ENCODE measurements at regions of chr11 and their contacts with region 1.

Region 1: GRCh38 chr11:111429066-111429506 is 50.0 kb upstream of the POU2AF1 start:
- DNase-seq: peak; percentile 58
- CTCF ChIP-seq: peak; percentile 75

Region 2: GRCh38 chr11:109946322-109946846 is 1482.7 kb before region 1 on chr11:
- CTCF ChIA-PET with region 1: no interaction called
- POLR2A ChIA-PET with region 1: no interaction called
- DNase-seq: peak; percentile 58
- CTCF ChIP-seq: peak; percentile 85

Region 3: GRCh38 chr11:111327908-111328624 is 101.0 kb before region 1 on chr11:
- CTCF ChIA-PET with region 1: interaction called, 20 read pairs
- POLR2A ChIA-PET with region 1: no interaction called
- DNase-seq: no peak
- CTCF ChIP-seq: no peak

Region 4: GRCh38 chr11:111384494-111384893 is 44.6 kb before region 1 on chr11:
- CTCF ChIA-PET with region 1: interaction called, 636 read pairs
- POLR2A ChIA-PET with region 1: no interaction called
- DNase-seq: no peak
- CTCF ChIP-seq: no peak

Region 5: DNA sequence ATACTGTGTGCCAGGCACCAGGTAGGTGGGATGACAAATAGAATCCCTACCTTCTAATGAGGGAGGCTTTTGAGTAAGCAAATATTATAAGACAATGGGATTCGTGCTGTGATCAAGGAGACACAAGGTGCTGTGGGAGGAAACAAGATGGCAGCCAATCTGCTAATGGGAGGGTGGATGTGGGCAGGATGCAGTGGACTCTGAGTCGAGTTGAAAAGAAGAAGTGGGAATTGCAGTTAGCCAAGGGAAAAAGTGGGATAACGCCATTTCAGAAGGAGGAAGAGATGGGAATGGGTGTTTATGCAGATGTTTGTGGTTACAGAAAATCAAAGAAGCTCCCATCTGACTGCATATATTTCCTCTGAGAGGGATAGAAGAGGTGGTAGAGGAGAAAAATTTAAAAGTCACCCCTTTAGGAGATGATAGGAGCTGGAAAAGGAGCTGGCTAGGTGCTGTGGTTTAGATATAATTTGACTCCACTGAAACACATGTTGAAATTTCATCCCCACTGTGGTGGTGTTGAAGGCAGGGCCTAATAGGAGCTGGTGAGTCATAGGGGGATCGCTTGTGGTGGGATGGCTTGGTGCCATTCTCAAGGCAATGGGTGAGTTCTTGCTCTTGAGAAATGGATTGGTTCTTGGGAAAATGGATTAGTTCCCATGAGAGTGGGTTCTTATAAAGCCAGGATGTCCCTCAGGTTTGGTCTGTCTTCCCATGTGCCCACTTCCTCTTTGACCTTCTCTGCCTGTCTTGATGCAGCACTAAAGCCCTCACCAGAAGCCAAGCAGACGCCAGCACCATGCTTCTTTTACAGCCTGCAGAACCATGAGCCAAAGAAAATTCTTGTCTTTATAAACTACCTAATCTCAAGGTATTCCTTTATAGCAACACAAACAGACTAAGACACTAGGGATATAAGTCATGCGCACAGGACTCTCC is 20.0 kb before region 1 on chr11:
- CTCF ChIA-PET with region 1: interaction called, 155 read pairs
- POLR2A ChIA-PET with region 1: no interaction called
- DNase-seq: no peak
- CTCF ChIP-seq: no peak

Region 6: DNA sequence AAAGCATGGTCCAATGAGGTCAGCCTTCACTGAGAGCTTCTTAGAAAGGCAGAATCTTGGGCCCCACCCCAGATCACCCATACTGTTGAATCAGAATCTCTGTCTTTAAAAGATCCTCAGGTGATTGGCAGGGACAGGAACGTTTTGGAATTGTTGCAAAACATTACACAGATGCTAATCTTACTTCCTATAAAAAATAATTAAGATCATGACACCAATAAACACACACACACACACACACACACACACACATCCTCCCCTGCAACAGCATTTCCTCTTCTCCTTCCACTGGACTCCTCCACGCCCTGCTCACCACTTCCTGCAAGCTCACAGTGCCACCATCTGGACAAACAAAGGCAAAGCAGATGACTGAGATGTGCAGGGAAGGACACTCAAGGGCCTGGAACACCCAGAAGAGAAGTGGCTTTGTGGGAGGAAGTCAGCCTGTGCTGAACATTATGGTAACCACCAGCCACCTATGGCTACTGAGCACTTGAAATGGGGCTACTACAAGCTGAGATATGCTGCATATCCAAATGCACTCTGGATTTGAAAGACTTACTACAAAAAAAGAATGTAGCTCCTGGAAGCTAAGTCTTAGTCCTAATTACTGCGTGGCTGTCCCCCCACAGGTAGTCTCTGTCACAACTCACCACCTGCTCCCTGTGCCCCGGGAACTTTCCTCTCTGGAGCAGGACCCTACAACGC is 17.5 kb after region 1 on chr11:
- CTCF ChIA-PET with region 1: interaction called, 75 read pairs
- POLR2A ChIA-PET with region 1: no interaction called
- DNase-seq: peak; percentile 89
- CTCF ChIP-seq: peak; percentile 93